GM12878 (cell line): ENCODE measurements at regions of chr22 and their contacts with region 1.

Region 1: DNA sequence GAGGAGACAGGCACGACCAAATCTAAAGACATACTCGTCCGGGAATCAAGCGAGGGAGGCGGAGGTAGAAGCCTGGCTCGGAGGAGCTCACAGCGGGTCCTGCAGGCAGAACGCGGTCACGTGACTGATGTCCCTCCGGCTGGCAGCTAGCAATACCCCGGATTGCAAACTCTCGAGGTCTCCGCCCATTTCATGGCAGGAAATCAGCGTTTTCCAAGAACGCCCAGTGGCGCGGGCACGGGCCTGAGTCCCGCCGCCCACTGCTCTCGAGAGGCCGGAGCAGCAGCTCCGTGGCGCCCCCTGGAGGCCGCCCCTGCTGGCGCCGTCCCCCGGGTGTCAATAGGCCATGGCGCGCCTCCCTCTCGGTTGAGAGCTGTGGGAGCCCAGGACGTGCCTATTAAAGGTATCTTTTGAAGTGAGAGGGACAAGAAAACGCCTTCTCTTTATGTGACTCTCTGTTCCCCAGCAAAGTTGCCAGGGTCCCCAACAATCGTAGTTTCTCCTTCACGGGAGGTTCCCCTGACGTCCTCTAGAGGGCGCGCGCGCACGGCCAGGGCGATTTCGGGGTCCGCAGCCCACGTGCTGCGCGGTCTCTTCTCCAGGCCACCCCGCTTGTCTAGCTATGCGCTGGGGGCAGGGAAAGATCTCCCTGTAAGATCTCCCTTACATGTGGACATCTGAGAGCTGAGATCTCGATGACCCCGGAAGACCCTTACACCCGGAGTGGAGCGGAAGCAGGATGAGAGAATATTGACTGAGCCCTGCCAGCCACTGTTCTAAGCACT is 37.3 kb upstream of the RBFOX2 start:
- DNase-seq: no peak
- ATAC-seq: peak; percentile 91
- H3K4me3 ChIP-seq: peak overlapping the region; percentile 46
- H3K27ac ChIP-seq: no peak overlapping the region
- H3K4me1 ChIP-seq: no peaks in the 10 kb centered on the region; the same call in 1 of the 2 replicates
- H3K27me3 ChIP-seq: no peaks in the 10 kb centered on the region; a peak in 1 of 4 replicates
- CTCF ChIP-seq: peak; percentile 58 to 97 (median 91)
- EP300 ChIP-seq: no peak
- POLR2A ChIP-seq: no peak
- RAD21 ChIP-seq: peak; percentile 45

Region 2: GRCh38 chr22:35627264-35628041 is 438.5 kb before region 1 on chr22:
- CTCF ChIA-PET with region 1: interaction called, 16 read pairs
- POLR2A ChIA-PET with region 1: no interaction called
- RAD21 ChIA-PET with region 1: interaction called, 4 read pairs
- SMC1A ChIA-PET with region 1: interaction called, 8 read pairs
- in situ Hi-C with region 1: no loop called
- intact Hi-C with region 1: no loop called
- DNase-seq: no peak
- ATAC-seq: peak; percentile 70
- H3K4me3 ChIP-seq: peak overlapping the region; percentile 76
- H3K27ac ChIP-seq: peak overlapping the region; percentile 52; the same call in 1 of the 2 replicates
- H3K4me1 ChIP-seq: peaks cover 17% of the 10 kb centered on the region
- H3K27me3 ChIP-seq: no peaks in the 10 kb centered on the region
- CTCF ChIP-seq: peak; percentile 48 to 90 (median 54); a peak in 5 of 6 replicates
- EP300 ChIP-seq: no peak
- POLR2A ChIP-seq: no peak
- RAD21 ChIP-seq: peak; percentile 92

Region 3: DNA sequence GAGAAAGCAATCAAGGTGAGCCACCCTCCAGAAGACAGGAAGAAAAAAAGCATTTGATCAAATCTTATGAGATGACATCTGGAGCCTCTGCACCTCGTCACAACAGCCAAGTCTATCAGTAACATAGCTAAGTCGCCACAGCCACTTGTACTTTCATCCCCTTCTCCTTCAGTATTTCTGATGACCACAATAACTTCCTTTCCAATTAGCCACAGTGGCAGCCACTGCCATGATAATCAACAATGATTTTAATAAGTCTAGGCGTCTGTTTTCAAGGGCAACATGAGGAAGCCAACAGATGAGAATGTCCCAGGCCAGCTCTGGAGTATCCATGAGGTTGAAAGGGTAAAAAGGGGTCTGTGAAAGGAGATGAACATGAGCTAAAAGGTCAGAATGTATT is 67.2 kb before region 1 on chr22:
- CTCF ChIA-PET with region 1: interaction called, 11 read pairs
- POLR2A ChIA-PET with region 1: no interaction called
- RAD21 ChIA-PET with region 1: interaction called, 3 read pairs
- SMC1A ChIA-PET with region 1: no interaction called
- in situ Hi-C with region 1: no loop called
- intact Hi-C with region 1: no loop called
- DNase-seq: no peak
- ATAC-seq: no peak
- H3K4me3 ChIP-seq: no peak overlapping the region
- H3K27ac ChIP-seq: no peak overlapping the region
- H3K4me1 ChIP-seq: no peaks in the 10 kb centered on the region
- H3K27me3 ChIP-seq: no peaks in the 10 kb centered on the region; a peak in 1 of 4 replicates
- CTCF ChIP-seq: no peak
- EP300 ChIP-seq: no peak
- POLR2A ChIP-seq: no peak
- RAD21 ChIP-seq: no peak

Region 4: GRCh38 chr22:36037102-36037758 is 28.7 kb before region 1 on chr22:
- CTCF ChIA-PET with region 1: interaction called, 15 read pairs
- POLR2A ChIA-PET with region 1: no interaction called
- RAD21 ChIA-PET with region 1: no interaction called
- SMC1A ChIA-PET with region 1: no interaction called
- in situ Hi-C with region 1: no loop called
- intact Hi-C with region 1: no loop called
- DNase-seq: no peak
- ATAC-seq: no peak
- H3K4me3 ChIP-seq: no peak overlapping the region
- H3K27ac ChIP-seq: no peak overlapping the region
- H3K4me1 ChIP-seq: no peaks in the 10 kb centered on the region
- H3K27me3 ChIP-seq: peaks cover 0 to 1% of the 10 kb centered on the region in 2 experiments; a peak in 3 of 4 replicates
- CTCF ChIP-seq: no peak
- EP300 ChIP-seq: no peak
- POLR2A ChIP-seq: no peak
- RAD21 ChIP-seq: no peak

Region 5: DNA sequence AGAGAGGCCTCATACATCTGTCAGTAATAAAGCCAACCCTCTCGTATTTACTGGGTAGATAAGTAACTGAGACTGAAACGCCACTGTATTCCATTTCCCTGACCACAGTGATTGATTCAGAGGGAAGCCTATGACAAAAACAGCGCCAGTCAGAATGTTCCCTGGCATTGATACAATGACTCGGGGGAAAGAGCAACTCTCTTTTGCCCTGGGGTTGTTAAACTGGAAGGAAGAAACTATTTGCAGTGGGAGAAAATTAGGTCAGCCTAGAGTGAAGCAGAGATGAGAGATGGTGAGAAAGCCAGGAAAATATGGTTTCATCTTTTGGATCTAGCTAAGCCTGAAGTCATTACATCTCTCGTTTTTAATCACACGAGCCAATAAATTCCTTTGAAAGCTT is 11.3 kb after region 1 on chr22:
- CTCF ChIA-PET with region 1: interaction called, 12 read pairs
- POLR2A ChIA-PET with region 1: no interaction called
- RAD21 ChIA-PET with region 1: no interaction called
- SMC1A ChIA-PET with region 1: no interaction called
- in situ Hi-C with region 1: no loop called
- intact Hi-C with region 1: no loop called
- DNase-seq: no peak
- ATAC-seq: no peak
- H3K4me3 ChIP-seq: no peak overlapping the region
- H3K27ac ChIP-seq: no peak overlapping the region
- H3K4me1 ChIP-seq: no peaks in the 10 kb centered on the region
- H3K27me3 ChIP-seq: no peaks in the 10 kb centered on the region
- CTCF ChIP-seq: no peak
- EP300 ChIP-seq: no peak
- POLR2A ChIP-seq: no peak
- RAD21 ChIP-seq: no peak

Region 6: GRCh38 chr22:36117053-36117554 is 51.1 kb after region 1 on chr22:
- CTCF ChIA-PET with region 1: interaction called, 15 read pairs
- POLR2A ChIA-PET with region 1: no interaction called
- RAD21 ChIA-PET with region 1: interaction called, 5 read pairs
- SMC1A ChIA-PET with region 1: interaction called, 3 read pairs
- in situ Hi-C with region 1: no loop called
- intact Hi-C with region 1: loop called (anchors 5 kb)
- DNase-seq: no peak
- ATAC-seq: no peak
- H3K4me3 ChIP-seq: no peak overlapping the region
- H3K27ac ChIP-seq: no peak overlapping the region
- H3K4me1 ChIP-seq: no peaks in the 10 kb centered on the region
- H3K27me3 ChIP-seq: no peaks in the 10 kb centered on the region
- CTCF ChIP-seq: no peak
- EP300 ChIP-seq: no peak
- POLR2A ChIP-seq: no peak
- RAD21 ChIP-seq: no peak

Region 7: DNA sequence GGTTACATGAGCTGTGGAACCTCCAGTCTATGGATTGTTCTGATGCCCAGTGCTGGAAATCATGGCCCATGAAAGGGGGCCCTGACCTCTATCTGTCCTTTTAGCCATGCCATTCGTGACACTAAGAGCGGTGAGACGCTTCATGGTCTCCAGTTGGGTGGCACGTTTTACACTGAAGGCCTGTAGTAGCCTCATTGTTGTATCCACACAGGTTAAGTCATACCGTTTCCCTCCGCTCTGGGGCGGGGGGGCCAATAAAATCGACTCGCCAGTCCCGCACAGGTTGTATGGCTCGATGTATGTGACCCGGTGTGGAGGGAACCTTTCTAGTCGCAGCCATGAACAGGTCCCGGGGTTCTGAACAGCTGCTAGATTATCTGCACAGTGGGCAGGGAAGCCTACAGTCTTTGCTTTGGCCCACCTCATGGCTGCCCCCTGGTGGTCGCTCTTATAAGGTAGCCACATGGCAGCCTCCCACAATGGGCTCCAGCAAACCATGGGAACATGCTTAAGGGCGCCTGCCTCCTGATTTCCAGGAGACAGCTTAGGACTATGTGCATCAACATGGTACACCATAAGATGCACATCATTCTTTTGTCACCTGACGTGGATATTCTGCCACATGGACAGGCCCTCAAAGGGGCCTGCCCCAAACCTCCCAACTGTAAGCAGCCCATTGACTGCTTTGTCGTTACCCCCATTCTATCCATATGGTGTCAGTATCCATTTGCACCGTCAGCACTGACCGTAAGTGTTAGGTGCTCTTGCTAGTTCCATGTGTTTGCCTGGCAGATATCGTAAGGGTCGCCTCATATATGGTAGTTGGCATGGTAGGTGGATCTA is 114.3 kb after region 1 on chr22:
- CTCF ChIA-PET with region 1: interaction called, 31 read pairs
- POLR2A ChIA-PET with region 1: no interaction called
- RAD21 ChIA-PET with region 1: interaction called, 4 read pairs
- SMC1A ChIA-PET with region 1: no interaction called
- in situ Hi-C with region 1: no loop called
- intact Hi-C with region 1: no loop called
- DNase-seq: no peak
- ATAC-seq: peak; percentile 100
- H3K4me3 ChIP-seq: no peak overlapping the region
- H3K27ac ChIP-seq: no peak overlapping the region
- H3K4me1 ChIP-seq: no peaks in the 10 kb centered on the region
- H3K27me3 ChIP-seq: no peaks in the 10 kb centered on the region
- CTCF ChIP-seq: peak; percentile 90 to 91 (median 91)
- EP300 ChIP-seq: no peak
- POLR2A ChIP-seq: no peak
- RAD21 ChIP-seq: peak; percentile 86